ENCODE measurements at regions of chr1 and their contacts with region 1.

Region 1: DNA sequence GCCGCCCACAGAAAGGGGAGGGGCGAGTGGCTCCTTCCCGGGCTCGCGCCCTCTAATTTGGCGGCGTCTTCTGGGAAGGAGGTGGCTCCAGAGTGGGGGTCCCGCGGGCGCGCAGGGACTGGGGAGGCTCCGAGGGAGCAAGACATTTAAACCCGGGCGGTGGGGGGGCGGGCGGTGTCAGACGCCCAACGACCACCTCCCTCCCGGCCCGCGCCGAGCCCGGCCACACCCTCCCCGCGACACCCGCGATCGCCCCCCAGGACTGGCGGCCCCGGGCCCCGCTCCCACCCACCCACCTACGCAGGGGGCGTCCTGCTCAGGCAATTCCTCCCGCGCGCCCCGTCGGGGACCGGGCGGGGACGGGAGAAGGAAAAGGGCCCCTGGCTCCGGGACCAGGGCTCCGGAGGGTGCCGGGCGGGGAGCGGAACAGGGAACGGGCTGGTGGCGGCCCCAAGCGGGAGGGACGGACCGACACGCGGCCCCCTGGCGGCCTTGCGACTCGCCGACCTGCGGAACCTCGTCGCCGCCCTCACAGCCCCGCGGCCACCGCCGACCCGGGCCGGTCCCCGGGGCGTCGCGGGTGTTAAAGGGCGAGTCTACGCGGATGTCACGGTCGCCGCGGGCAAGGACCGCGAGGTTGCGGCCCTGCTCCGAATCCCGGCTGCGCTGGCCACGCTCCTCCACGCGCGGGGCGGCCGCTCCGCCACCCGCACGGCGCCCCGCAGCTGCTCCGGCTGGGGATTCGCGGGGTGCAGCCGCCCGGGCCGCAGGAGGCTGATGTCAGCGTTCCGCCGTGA is 94.0 kb upstream of the FMN2 start:
- DNase-seq: no peak
- H3K4me3 Mint-ChIP-seq: no peak overlapping the region
- H3K27ac Mint-ChIP-seq: no peak overlapping the region
- H3K4me1 Mint-ChIP-seq: peaks cover 2% of the 10 kb centered on the region
- H3K27me3 Mint-ChIP-seq: peaks cover 40% of the 10 kb centered on the region

Region 2: DNA sequence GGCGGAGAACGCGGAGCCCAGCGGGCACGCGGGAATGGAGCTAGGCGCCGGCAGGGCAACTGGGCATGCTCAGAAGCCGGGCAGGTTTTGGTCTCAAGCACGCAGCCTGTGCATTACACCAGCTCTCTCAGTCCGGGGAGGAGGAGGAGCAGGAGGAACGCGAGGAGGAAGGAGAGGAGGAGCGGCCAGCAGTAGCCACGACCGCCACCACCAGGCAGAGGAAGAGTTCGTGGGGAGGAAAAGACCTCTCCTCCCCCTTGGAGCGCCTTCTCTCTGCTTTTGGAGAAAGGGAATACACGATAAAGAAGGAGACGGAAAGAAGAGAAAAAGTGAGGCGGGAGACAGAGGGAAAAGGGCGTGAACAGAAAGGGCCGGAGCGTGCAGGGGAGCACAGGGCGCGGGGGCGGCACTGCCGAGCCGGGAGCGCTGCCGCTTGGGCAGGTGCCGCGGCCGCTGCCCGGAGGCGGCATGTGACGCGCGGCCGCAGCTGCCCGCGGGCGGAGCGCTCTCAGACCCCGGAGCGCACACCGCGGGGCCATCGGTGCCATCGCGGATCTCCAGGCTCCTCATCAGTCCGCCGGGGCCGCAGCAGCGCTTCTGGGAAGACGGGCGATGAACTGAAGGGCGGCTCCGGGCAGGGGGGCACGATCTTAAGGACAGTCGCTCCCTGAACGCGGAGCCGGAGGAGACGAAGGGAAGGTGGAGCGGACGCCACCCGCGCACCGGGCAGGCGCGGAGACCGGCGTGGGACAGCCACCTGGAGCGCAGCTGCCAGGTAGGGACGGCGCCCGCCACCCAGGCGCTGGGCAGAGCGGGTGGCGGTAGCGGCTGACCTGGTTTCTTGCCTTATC is 611.0 kb before region 1 on chr1 and contains the start of gene CHRM3:
- intact Hi-C with region 1: loop called (anchors 10 kb)
- DNase-seq: no peak
- H3K4me3 Mint-ChIP-seq: peak within 1 kb of the TSS; percentile 82
- H3K27ac Mint-ChIP-seq: peak within 1 kb of the TSS; percentile 47
- H3K4me1 Mint-ChIP-seq: peaks cover 15% of the 10 kb centered on the region
- H3K27me3 Mint-ChIP-seq: peaks cover 60% of the 10 kb centered on the region
- total RNA-seq, gene CHRM3: 0.07 TPM in 1 of 2 replicates, not detected in the other

Region 3: GRCh38 chr1:239841631-239842030 is 156.1 kb before region 1 on chr1:
- intact Hi-C with region 1: no loop called
- DNase-seq: no peak
- H3K4me3 Mint-ChIP-seq: no peak overlapping the region
- H3K27ac Mint-ChIP-seq: no peak overlapping the region
- H3K4me1 Mint-ChIP-seq: no peaks in the 10 kb centered on the region
- H3K27me3 Mint-ChIP-seq: peaks cover 2% of the 10 kb centered on the region

Region 4: DNA sequence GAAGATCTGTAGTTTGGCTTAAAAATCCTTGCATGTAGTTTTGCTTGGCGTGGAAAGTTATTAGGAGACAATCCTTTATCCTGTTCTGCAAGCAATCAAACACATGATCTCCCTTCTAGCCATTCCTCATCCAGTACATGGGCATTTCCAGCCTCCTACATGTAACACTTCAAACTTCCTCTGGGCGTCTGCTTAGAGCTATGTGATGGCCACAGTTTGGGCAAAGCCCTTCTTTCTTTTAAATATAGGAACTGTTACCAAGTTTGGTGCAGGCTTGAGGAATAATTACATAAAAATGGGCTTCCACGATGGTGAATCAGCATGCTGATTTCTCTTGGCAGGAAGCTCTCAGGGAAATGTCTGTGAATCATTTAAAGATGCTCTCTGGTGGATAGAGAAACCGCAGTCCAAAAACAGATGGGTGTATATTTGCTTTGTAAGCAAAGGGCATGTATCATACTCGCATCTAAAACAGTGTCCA is 82.9 kb before region 1 on chr1:
- intact Hi-C with region 1: no loop called
- DNase-seq: no peak
- H3K4me3 Mint-ChIP-seq: no peak overlapping the region
- H3K27ac Mint-ChIP-seq: no peak overlapping the region
- H3K4me1 Mint-ChIP-seq: peaks cover 2% of the 10 kb centered on the region
- H3K27me3 Mint-ChIP-seq: peaks cover 8% of the 10 kb centered on the region

Region 5: GRCh38 chr1:240178366-240178765 is 180.7 kb after region 1 on chr1:
- intact Hi-C with region 1: no loop called
- DNase-seq: no peak
- H3K4me3 Mint-ChIP-seq: no peak overlapping the region
- H3K27ac Mint-ChIP-seq: no peak overlapping the region
- H3K4me1 Mint-ChIP-seq: peaks cover 2% of the 10 kb centered on the region
- H3K27me3 Mint-ChIP-seq: no peaks in the 10 kb centered on the region